Caco-2 (cell line): ENCODE measurements at regions of chr20 and their contacts with region 1.

Region 1: GRCh38 chr20:51326201-51326819 is 216.2 kb downstream of the NFATC2 start:
- DNase-seq: peak; percentile 77 to 79
- H3K4me3 ChIP-seq: no peak overlapping the region
- H3K4me3 Mint-ChIP-seq: no peak overlapping the region
- H3K27ac Mint-ChIP-seq: no peak overlapping the region
- H3K4me1 ChIP-seq: no peaks in the 10 kb centered on the region
- H3K4me1 Mint-ChIP-seq: no peaks in the 10 kb centered on the region
- H3K27me3 ChIP-seq: no peaks in the 10 kb centered on the region; the same call in 1 of the 2 replicates
- H3K27me3 Mint-ChIP-seq: peaks cover 19% of the 10 kb centered on the region
- CTCF ChIP-seq: peak; percentile 88 to 96

Region 2: GRCh38 chr20:50885781-50886486 is 440.4 kb before region 1 on chr20:
- CTCF ChIA-PET with region 1: no interaction called
- POLR2A ChIA-PET with region 1: no interaction called
- intact Hi-C with region 1: no loop called
- DNase-seq: peak in 1 of 2 experiments; percentile 38
- H3K4me3 ChIP-seq: no peak overlapping the region
- H3K4me3 Mint-ChIP-seq: no peak overlapping the region
- H3K27ac Mint-ChIP-seq: peak overlapping the region; percentile 66
- H3K4me1 ChIP-seq: no peaks in the 10 kb centered on the region
- H3K4me1 Mint-ChIP-seq: no peaks in the 10 kb centered on the region
- H3K27me3 ChIP-seq: no peaks in the 10 kb centered on the region
- H3K27me3 Mint-ChIP-seq: no peaks in the 10 kb centered on the region
- CTCF ChIP-seq: no peak

Region 3: GRCh38 chr20:50980851-50981713 is 345.2 kb before region 1 on chr20:
- CTCF ChIA-PET with region 1: interaction called, 36 read pairs
- POLR2A ChIA-PET with region 1: no interaction called
- intact Hi-C with region 1: no loop called
- DNase-seq: peak; percentile 77 to 85
- H3K4me3 ChIP-seq: no peak overlapping the region
- H3K4me3 Mint-ChIP-seq: no peak overlapping the region
- H3K27ac Mint-ChIP-seq: no peak overlapping the region
- H3K4me1 ChIP-seq: peaks cover 4% of the 10 kb centered on the region
- H3K4me1 Mint-ChIP-seq: peaks cover 10% of the 10 kb centered on the region
- H3K27me3 ChIP-seq: 0 out of 2 replicates have a peak, but pooled peaks cover 1% of the 10 kb centered on the region
- H3K27me3 Mint-ChIP-seq: peaks cover 17% of the 10 kb centered on the region
- CTCF ChIP-seq: peak; percentile 96 to 98

Region 4: GRCh38 chr20:51014797-51015722 is 311.2 kb before region 1 on chr20:
- CTCF ChIA-PET with region 1: interaction called, 10 read pairs
- POLR2A ChIA-PET with region 1: no interaction called
- intact Hi-C with region 1: no loop called
- DNase-seq: peak; percentile 77 to 83
- H3K4me3 ChIP-seq: no peak overlapping the region
- H3K4me3 Mint-ChIP-seq: no peak overlapping the region
- H3K27ac Mint-ChIP-seq: no peak overlapping the region
- H3K4me1 ChIP-seq: no peaks in the 10 kb centered on the region
- H3K4me1 Mint-ChIP-seq: no peaks in the 10 kb centered on the region
- H3K27me3 ChIP-seq: no peaks in the 10 kb centered on the region; the same call in 1 of the 2 replicates
- H3K27me3 Mint-ChIP-seq: peaks cover 7% of the 10 kb centered on the region
- CTCF ChIP-seq: peak; percentile 87

Region 5: DNA sequence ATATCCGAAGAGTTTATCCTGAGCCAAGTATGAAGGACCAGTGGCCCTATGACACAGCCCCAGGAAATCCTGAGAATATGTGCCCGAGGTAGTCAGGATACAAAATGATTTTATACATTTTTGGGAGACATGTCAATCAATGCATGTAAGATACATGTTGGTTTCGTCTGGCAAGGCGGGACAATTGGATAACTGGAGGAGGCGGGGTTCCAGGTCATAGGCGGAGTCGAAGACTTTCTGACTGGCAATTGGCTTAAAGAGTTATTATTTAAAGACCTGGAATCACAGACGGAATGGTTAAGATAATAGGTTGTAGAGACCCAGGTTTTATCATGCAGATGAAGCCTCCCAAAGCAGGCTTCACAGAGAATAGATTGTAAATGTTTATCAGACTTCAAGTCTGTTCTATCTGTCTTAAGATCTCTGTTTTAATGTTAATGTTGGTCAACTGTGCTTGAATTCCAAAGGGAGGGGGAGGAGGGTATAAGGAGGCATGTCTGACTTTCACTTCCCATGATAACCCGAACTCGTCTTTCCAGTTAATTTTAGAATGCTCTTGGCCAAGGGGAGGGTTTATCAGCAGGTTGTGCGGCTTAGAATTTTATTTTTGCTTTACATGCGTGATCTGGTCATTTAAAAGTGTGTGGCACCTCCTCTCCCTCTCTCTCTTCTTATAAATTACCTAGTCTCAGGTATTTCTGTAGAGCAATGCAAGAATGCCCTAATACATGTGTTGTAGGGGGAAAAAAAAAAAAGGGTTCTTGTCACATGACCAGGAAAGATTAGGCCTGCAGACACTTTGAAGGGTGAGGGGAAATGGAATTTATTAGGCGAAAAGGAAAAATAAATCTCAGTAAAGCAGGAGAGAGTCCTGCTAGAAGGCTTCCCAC is 14.5 kb before region 1 on chr20:
- CTCF ChIA-PET with region 1: interaction called, 12 read pairs
- POLR2A ChIA-PET with region 1: no interaction called
- intact Hi-C with region 1: no loop called
- DNase-seq: peak in 1 of 2 experiments; percentile 77
- H3K4me3 ChIP-seq: no peak overlapping the region
- H3K4me3 Mint-ChIP-seq: peak overlapping the region; percentile 60
- H3K27ac Mint-ChIP-seq: peak overlapping the region; percentile 48
- H3K4me1 ChIP-seq: peaks cover 21% of the 10 kb centered on the region
- H3K4me1 Mint-ChIP-seq: peaks cover 30% of the 10 kb centered on the region
- H3K27me3 ChIP-seq: no peaks in the 10 kb centered on the region
- H3K27me3 Mint-ChIP-seq: no peaks in the 10 kb centered on the region
- CTCF ChIP-seq: no peak